Activated CD4-positive, alpha-beta memory T cell treated with anti-CD3 and anti-CD28 coated beads for 36 hours (primary cell): ENCODE measurements at regions of chr14 and their contacts with region 1.

Region 1: GRCh38 chr14:99271951-99272631 is at the start of gene BCL11B:
- DNase-seq: peak; percentile 95
- H3K4me3 Mint-ChIP-seq: peak within 1 kb of the TSS; percentile 96
- H3K27ac Mint-ChIP-seq: peak within 1 kb of the TSS; percentile 100
- H3K4me1 Mint-ChIP-seq: peaks cover 29% of the 10 kb centered on the region
- H3K27me3 Mint-ChIP-seq: peaks cover 3% of the 10 kb centered on the region
- total RNA-seq, gene BCL11B: 48.9 to 49.1 TPM

Region 2: DNA sequence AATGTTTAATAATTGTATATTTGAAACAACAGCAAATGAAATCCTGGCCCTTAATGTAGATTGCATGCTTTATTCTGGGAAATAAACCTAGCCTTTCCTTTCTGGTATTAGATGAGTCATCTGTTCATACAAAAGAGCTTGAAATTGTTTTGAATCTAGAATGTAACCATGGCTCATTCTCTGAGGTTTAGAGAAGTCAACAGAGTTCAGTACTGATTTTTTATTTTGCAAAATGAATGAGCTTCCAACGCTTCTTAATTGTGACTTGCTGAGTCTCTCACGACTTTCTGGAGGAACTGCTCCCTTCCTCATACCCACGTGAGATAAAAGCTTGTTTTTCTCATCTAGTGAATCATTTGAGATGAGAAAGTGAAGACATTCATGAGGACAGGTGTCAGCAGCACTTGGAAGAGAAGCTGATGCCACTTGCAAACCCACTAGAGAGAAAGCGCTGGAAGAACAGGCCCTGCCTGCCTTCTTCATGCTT is 1965.3 kb before region 1 on chr14:
- CTCF ChIA-PET with region 1: no interaction called
- POLR2A ChIA-PET with region 1: no interaction called
- intact Hi-C with region 1: loop called (anchors 2 kb)
- DNase-seq: peak; percentile 39
- H3K4me3 Mint-ChIP-seq: no peak overlapping the region
- H3K27ac Mint-ChIP-seq: peak overlapping the region; percentile 92
- H3K4me1 Mint-ChIP-seq: peaks cover 29% of the 10 kb centered on the region
- H3K27me3 Mint-ChIP-seq: no peaks in the 10 kb centered on the region

Region 3: DNA sequence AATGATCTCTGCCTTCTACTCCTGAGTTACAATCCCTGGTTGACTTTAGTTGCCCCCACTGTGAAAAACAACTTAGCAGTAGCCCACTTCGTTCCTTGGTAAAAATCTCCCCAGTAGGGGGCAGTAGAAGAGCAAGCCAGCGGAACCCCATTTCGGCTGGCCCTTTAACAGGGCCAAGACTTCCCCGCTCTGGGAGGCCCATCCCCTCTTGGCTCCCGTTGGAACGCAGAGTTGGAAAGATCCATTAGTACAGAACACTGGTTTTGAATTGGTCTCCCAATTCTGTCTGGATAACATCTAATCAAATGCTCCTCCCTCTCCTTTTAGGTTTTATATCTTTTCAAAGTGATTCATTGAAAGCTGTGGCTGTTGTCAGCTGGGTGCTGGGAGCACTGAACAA is 1133.4 kb before region 1 on chr14:
- CTCF ChIA-PET with region 1: interaction called, 29 read pairs
- POLR2A ChIA-PET with region 1: interaction called, 6 read pairs
- intact Hi-C with region 1: loop called (anchors 2 kb)
- DNase-seq: peak; percentile 73
- H3K4me3 Mint-ChIP-seq: peak overlapping the region; percentile 42
- H3K27ac Mint-ChIP-seq: peak overlapping the region; percentile 80
- H3K4me1 Mint-ChIP-seq: peaks cover 76% of the 10 kb centered on the region
- H3K27me3 Mint-ChIP-seq: no peaks in the 10 kb centered on the region

Region 4: GRCh38 chr14:99230208-99231151 is 41.6 kb before region 1 on chr14:
- CTCF ChIA-PET with region 1: interaction called, 110 read pairs
- POLR2A ChIA-PET with region 1: interaction called, 425 read pairs
- intact Hi-C with region 1: loop called (anchors 1 kb)
- DNase-seq: peak; percentile 94
- H3K4me3 Mint-ChIP-seq: peak overlapping the region; percentile 68
- H3K27ac Mint-ChIP-seq: peak overlapping the region; percentile 96
- H3K4me1 Mint-ChIP-seq: peaks cover 95% of the 10 kb centered on the region
- H3K27me3 Mint-ChIP-seq: no peaks in the 10 kb centered on the region

Region 5: GRCh38 chr14:99415496-99416281 is 143.6 kb after region 1 on chr14:
- CTCF ChIA-PET with region 1: interaction called, 7 read pairs
- POLR2A ChIA-PET with region 1: no interaction called
- intact Hi-C with region 1: loop called (anchors 5 kb)
- DNase-seq: peak; percentile 70
- H3K4me3 Mint-ChIP-seq: no peak overlapping the region
- H3K27ac Mint-ChIP-seq: no peak overlapping the region
- H3K4me1 Mint-ChIP-seq: peaks cover 28% of the 10 kb centered on the region
- H3K27me3 Mint-ChIP-seq: no peaks in the 10 kb centered on the region